Common myeloid progenitor, CD34-positive (primary cell): ENCODE measurements at regions of chr17 and their contacts with region 1.

Region 1: DNA sequence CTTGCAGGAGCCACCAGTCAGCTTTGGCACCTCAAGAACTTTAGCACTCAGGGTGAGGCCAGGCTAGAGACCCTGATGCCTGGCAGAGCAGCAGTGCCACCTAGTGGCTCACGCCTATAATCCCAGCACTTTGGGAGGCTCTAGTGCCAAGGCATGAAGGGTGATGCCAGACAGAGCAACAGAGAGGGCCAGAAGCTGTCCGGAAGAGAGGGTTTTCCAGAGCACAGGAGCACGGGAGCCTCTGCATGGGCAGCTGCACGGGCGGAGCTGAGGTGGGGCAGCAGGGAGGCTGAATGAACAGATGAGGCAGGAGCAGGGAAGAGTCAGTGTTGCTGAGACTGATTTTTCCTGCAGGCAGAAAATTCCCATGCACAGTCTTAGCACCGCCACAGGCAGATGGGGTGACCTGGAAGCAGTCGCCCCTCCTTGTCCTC is 38.9 kb downstream of the MYH3 start:
- DNase-seq: peak; percentile 57 to 84 (median 81)
- H3K4me3 ChIP-seq: no peak overlapping the region
- H3K27ac ChIP-seq: no peak overlapping the region
- H3K4me1 ChIP-seq: peaks cover 0 to 6% (median 0%) of the 10 kb centered on the region in 4 experiments
- H3K27me3 ChIP-seq: no peaks in the 10 kb centered on the region

Region 2: GRCh38 chr17:10295728-10296343 is 322.4 kb before region 1 on chr17:
- CTCF ChIA-PET with region 1: interaction called, 53 read pairs
- POLR2A ChIA-PET with region 1: no interaction called
- DNase-seq: peak; percentile 58 to 81 (median 77)
- H3K4me3 ChIP-seq: no peak overlapping the region
- H3K27ac ChIP-seq: no peak overlapping the region
- H3K4me1 ChIP-seq: peaks cover 0 to 4% (median 2%) of the 10 kb centered on the region in 4 experiments
- H3K27me3 ChIP-seq: peaks cover 0 to 2% (median 0%) of the 10 kb centered on the region in 5 experiments

Region 3: DNA sequence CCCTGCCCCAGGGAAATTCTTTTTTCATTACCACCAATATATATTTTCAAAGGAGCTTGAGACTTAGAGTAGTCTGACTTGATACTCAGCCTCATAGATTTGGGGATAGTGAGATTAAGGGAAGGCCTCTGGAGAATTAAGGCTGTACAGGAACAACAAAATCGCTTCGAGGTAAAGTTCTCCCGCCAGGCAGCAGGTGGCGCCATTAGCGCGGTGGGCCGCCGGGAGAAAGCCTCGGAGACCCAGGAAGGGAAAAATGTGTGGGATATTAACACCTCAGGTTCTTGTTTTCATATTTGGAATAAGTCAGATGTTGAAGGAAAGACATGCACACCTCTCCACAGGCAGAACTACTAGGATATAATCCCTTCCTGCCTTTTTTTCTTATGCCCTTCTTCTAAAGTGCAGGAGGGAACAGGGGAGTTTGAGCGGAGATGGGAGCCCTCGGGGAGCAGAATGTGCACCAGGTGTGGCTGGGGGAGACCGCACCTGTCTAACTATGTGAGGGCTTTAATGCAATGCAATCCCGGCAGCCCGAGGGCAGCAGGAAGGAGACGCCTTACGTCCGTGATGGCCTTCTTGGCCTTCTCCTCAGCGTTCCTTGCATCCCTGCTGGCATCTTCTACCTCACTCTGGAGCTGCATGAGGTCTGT is 13.0 kb after region 1 on chr17:
- CTCF ChIA-PET with region 1: interaction called, 82 read pairs
- POLR2A ChIA-PET with region 1: no interaction called
- DNase-seq: peak in 1 of 3 donors; percentile 16
- H3K4me3 ChIP-seq: no peak overlapping the region
- H3K27ac ChIP-seq: no peak overlapping the region
- H3K4me1 ChIP-seq: no peaks in the 10 kb centered on the region
- H3K27me3 ChIP-seq: no peaks in the 10 kb centered on the region